GM12878 (cell line): ENCODE measurements at regions of chr16 and their contacts with region 1.

Region 1: GRCh38 chr16:17416461-17417311 is 54.1 kb downstream of the XYLT1 start:
- DNase-seq: peak; percentile 89
- ATAC-seq: peak; percentile 95
- H3K4me3 ChIP-seq: peak overlapping the region; percentile 34; the same call in 1 of the 2 replicates
- H3K27ac ChIP-seq: peak overlapping the region; percentile 90
- H3K4me1 ChIP-seq: peaks cover 51% of the 10 kb centered on the region
- H3K27me3 ChIP-seq: no peaks in the 10 kb centered on the region
- CTCF ChIP-seq: peak; percentile 23 to 38 (median 26); a peak in 5 of 6 replicates
- EP300 ChIP-seq: peak; percentile 83 to 90
- POLR2A ChIP-seq: peak; percentile 73
- RAD21 ChIP-seq: peak; percentile 59

Region 2: GRCh38 chr16:17258848-17259713 is 157.6 kb before region 1 on chr16:
- CTCF ChIA-PET with region 1: interaction called, 4 read pairs
- POLR2A ChIA-PET with region 1: no interaction called
- RAD21 ChIA-PET with region 1: interaction called, 11 read pairs
- SMC1A ChIA-PET with region 1: interaction called, 10 read pairs
- in situ Hi-C with region 1: loop called (anchors 5 kb)
- intact Hi-C with region 1: no loop called
- DNase-seq: peak; percentile 79
- ATAC-seq: peak; percentile 88
- H3K4me3 ChIP-seq: peak overlapping the region; percentile 47
- H3K27ac ChIP-seq: peak overlapping the region; percentile 93
- H3K4me1 ChIP-seq: peaks cover 33% of the 10 kb centered on the region
- H3K27me3 ChIP-seq: no peaks in the 10 kb centered on the region
- CTCF ChIP-seq: peak; percentile 64 to 75 (median 68)
- EP300 ChIP-seq: peak; percentile 22 to 83; a peak in 2 of 4 replicates
- POLR2A ChIP-seq: peak; percentile 62
- RAD21 ChIP-seq: peak; percentile 68

Region 3: DNA sequence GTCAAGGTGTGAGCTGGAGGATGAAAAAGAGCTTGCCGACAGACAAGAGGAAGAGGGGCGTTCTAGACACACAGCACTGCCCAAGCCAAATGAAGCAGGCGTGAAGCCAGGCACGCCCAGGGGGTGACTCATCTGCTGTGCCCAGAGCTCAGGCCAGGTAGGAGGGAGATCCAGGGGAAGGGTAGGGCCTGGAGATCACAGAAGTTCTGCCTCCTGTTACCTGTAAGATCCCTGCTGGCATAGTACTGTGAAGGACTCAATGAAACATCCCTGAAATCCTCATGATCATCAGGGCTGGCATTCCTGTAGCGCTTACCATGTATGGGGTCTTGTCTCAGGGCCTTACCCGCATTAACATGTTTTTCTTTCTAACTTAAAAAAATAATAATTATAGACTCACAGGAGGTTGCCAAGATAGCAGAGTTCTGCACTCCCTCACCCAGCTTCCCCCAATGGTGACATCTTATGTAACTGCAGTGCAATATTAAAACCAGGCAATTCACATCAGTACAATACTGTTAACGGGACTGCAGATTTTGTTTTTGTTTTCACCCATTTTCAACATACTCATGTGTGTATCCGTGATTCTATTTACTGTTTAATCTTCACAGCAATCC is 104.5 kb before region 1 on chr16:
- CTCF ChIA-PET with region 1: no interaction called
- POLR2A ChIA-PET with region 1: no interaction called
- RAD21 ChIA-PET with region 1: no interaction called
- SMC1A ChIA-PET with region 1: no interaction called
- in situ Hi-C with region 1: no loop called
- intact Hi-C with region 1: no loop called
- DNase-seq: no peak
- ATAC-seq: peak; percentile 39; the same call in 2 of the 3 replicates
- H3K4me3 ChIP-seq: no peak overlapping the region
- H3K27ac ChIP-seq: no peak overlapping the region
- H3K4me1 ChIP-seq: peaks cover 10% of the 10 kb centered on the region
- H3K27me3 ChIP-seq: no peaks in the 10 kb centered on the region
- CTCF ChIP-seq: no peak
- EP300 ChIP-seq: no peak
- POLR2A ChIP-seq: no peak
- RAD21 ChIP-seq: no peak

Region 4: DNA sequence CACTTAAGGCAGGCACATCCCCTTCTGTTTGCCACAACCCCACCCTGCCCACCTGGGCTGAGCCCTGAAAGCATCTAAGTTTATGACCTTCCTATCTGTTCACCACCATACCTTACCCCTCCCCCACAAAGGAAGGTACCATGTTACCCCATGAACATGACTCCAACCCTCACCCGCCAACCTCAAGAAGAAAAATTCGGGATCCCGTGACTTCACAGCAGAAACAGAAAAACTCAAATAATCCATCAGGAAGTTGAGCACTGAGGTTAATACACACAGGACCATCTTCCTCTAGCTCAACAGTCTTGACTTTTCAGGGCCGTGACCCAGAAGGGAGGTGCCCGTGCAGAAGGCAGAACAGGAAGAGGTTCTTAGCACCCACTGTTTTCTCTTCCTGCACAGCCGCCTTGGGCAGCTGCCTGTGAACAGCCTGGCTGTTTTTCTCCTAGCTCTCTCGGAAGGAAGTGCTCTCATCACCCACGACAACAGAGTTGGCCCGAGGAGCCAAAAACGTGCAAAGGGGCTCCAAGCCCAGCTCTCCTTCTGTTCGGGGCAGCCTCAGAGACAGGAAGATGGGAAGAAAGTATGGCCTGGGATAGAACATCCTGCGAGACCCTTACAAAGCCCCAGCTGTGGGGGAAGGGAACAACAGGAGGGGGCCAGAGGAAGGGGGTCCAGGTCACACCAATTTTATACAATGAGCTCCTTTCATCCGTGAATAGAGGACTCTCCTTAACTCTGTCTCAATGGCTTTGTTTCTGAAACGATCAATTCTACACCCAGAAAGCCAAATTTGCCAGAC is 47.1 kb before region 1 on chr16:
- CTCF ChIA-PET with region 1: interaction called, 15 read pairs
- POLR2A ChIA-PET with region 1: interaction called, 7 read pairs
- RAD21 ChIA-PET with region 1: interaction called, 27 read pairs
- SMC1A ChIA-PET with region 1: interaction called, 13 read pairs
- in situ Hi-C with region 1: no loop called
- intact Hi-C with region 1: no loop called
- DNase-seq: peak; percentile 53
- ATAC-seq: peak; percentile 94
- H3K4me3 ChIP-seq: peak overlapping the region; percentile 41; the same call in 1 of the 2 replicates
- H3K27ac ChIP-seq: peak overlapping the region; percentile 36
- H3K4me1 ChIP-seq: peaks cover 52% of the 10 kb centered on the region
- H3K27me3 ChIP-seq: no peaks in the 10 kb centered on the region
- CTCF ChIP-seq: no peak
- EP300 ChIP-seq: peak in 1 of 2 experiments; percentile 49; a peak in 1 of 4 replicates
- POLR2A ChIP-seq: peak; percentile 50
- RAD21 ChIP-seq: no peak

Region 5: GRCh38 chr16:17377360-17378324 is 39.0 kb before region 1 on chr16:
- CTCF ChIA-PET with region 1: interaction called, 12 read pairs
- POLR2A ChIA-PET with region 1: interaction called, 13 read pairs
- RAD21 ChIA-PET with region 1: interaction called, 28 read pairs
- SMC1A ChIA-PET with region 1: interaction called, 47 read pairs
- in situ Hi-C with region 1: no loop called
- intact Hi-C with region 1: no loop called
- DNase-seq: peak; percentile 80
- ATAC-seq: peak; percentile 90
- H3K4me3 ChIP-seq: 0 out of 2 replicates have a peak overlapping the region, but pooled peaks have one; percentile 43
- H3K27ac ChIP-seq: peak overlapping the region; percentile 72
- H3K4me1 ChIP-seq: peaks cover 35% of the 10 kb centered on the region
- H3K27me3 ChIP-seq: no peaks in the 10 kb centered on the region
- CTCF ChIP-seq: no peak
- EP300 ChIP-seq: peak; percentile 84 to 91; a peak in 2 of 4 replicates
- POLR2A ChIP-seq: no peak
- RAD21 ChIP-seq: peak; percentile 21; the same call in 1 of the 2 replicates

Region 6: DNA sequence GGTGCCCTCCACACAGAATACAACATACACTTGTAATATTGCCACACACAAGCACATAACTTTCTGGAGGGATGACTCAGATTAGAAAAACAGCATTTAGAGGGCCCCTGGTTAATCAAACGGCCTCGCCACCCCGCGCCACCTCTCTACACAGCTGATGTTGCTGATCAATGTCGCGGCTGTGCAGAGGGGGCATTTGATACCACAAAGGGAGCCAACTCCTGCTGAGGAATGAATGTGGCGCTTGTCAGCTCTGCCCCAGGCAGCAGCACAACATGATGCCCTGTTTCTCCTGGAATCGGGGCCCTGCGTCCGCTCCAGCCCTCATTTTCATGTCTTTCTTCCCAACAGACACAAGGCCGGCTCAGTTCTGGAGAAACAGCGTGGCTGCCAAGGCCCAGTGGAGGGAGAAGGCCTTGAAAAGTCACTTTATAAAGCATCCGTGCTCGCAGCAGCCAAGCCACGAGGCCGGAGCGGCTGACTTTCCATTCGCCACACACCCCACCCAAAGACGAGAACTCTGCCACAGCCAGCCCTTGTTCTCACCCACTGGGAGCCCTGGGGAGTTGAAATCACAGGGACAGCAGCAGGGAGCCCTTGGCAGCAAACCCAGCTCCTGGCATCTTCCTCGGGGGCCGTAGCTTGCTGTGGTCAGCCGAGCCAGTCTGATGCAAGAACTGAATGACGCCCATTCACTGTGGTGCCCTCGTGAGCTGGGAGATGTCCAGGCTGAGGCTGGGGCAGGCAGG is 11.6 kb before region 1 on chr16:
- CTCF ChIA-PET with region 1: interaction called, 7 read pairs
- POLR2A ChIA-PET with region 1: interaction called, 5 read pairs
- RAD21 ChIA-PET with region 1: interaction called, 14 read pairs
- SMC1A ChIA-PET with region 1: interaction called, 30 read pairs
- in situ Hi-C with region 1: no loop called
- intact Hi-C with region 1: no loop called
- DNase-seq: no peak
- ATAC-seq: no peak
- H3K4me3 ChIP-seq: no peak overlapping the region
- H3K27ac ChIP-seq: no peak overlapping the region
- H3K4me1 ChIP-seq: peaks cover 24% of the 10 kb centered on the region
- H3K27me3 ChIP-seq: no peaks in the 10 kb centered on the region
- CTCF ChIP-seq: no peak
- EP300 ChIP-seq: no peak
- POLR2A ChIP-seq: no peak
- RAD21 ChIP-seq: no peak

Region 7: DNA sequence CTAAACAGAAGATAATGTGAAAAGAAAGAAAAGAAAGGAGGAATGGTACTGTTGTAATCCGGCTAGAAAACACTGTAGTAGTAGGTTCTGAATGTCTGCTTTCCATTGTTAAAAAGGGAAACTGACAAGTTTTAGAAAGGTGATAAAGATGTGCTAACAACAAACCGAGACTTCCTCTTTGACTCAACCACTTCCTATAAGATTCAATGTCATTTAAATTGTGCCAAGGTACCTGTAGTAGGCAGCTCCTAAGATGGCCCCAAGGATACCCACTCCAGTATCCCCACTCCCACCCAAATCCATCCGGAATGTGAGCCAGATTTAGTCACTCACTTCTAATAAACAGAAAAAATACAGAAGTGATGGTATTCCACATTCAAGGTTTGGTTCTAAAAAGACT is 22.9 kb after region 1 on chr16:
- CTCF ChIA-PET with region 1: interaction called, 12 read pairs
- POLR2A ChIA-PET with region 1: interaction called, 3 read pairs
- RAD21 ChIA-PET with region 1: interaction called, 12 read pairs
- SMC1A ChIA-PET with region 1: interaction called, 32 read pairs
- in situ Hi-C with region 1: no loop called
- intact Hi-C with region 1: no loop called
- DNase-seq: no peak
- ATAC-seq: peak; percentile 75
- H3K4me3 ChIP-seq: no peak overlapping the region
- H3K27ac ChIP-seq: no peak overlapping the region
- H3K4me1 ChIP-seq: peaks cover 13% of the 10 kb centered on the region
- H3K27me3 ChIP-seq: no peaks in the 10 kb centered on the region
- CTCF ChIP-seq: no peak
- EP300 ChIP-seq: peak in 1 of 2 experiments; percentile 50; a peak in 1 of 4 replicates
- POLR2A ChIP-seq: no peak
- RAD21 ChIP-seq: no peak

Region 8: GRCh38 chr16:17459530-17460521 is 43.1 kb after region 1 on chr16:
- CTCF ChIA-PET with region 1: interaction called, 18 read pairs
- POLR2A ChIA-PET with region 1: interaction called, 25 read pairs
- RAD21 ChIA-PET with region 1: interaction called, 111 read pairs
- SMC1A ChIA-PET with region 1: interaction called, 110 read pairs
- in situ Hi-C with region 1: no loop called
- intact Hi-C with region 1: no loop called
- DNase-seq: no peak
- ATAC-seq: peak; percentile 72
- H3K4me3 ChIP-seq: no peak overlapping the region; the same call in 1 of the 2 replicates
- H3K27ac ChIP-seq: no peak overlapping the region
- H3K4me1 ChIP-seq: peaks cover 40% of the 10 kb centered on the region
- H3K27me3 ChIP-seq: no peaks in the 10 kb centered on the region
- CTCF ChIP-seq: no peak
- EP300 ChIP-seq: no peak
- POLR2A ChIP-seq: no peak
- RAD21 ChIP-seq: no peak

Region 9: DNA sequence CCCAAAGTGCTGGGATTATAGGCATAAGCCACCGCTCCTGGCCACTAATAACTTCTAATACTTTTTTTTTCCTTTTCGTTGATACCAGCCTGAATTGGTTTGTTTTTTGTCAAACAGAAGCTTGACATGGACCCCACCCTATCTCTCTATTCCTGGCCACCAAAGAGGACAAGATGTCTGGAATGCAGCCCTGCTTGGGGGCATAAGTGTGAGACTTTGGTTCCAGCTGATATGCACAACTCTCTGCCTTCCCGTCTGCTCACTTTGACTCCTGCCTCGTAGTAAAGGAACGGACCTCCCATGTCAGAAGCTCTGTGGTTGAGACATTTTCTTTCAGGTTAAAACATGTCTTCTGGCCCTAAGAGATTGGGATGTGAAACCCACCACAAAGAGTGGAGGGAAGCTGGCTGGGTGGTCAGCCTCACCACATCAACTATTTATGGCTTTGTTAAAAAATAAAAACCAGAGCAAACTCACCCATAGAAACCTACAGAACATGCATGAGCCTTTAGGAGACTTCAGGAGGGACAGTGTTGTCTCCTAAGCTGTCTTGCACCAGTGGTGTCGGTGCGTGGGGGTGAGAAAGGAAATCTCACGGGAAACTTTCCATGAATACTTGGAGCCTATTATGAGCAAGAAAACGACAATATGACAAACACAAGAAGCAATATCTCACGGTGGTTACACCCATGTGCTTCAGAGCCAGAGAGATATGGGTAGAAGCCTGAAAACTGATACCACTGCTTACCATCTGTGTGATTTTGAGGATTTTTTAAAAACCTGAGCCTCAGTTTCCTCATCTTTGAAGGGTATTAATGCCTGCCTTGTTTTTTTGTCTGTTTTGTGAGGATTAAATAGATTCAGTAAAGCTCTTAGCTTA is 115.7 kb after region 1 on chr16:
- CTCF ChIA-PET with region 1: no interaction called
- POLR2A ChIA-PET with region 1: no interaction called
- RAD21 ChIA-PET with region 1: no interaction called
- SMC1A ChIA-PET with region 1: no interaction called
- in situ Hi-C with region 1: no loop called
- intact Hi-C with region 1: no loop called
- DNase-seq: no peak
- ATAC-seq: peak; percentile 51
- H3K4me3 ChIP-seq: no peak overlapping the region
- H3K27ac ChIP-seq: no peak overlapping the region; the same call in 1 of the 2 replicates
- H3K4me1 ChIP-seq: peaks cover 25% of the 10 kb centered on the region
- H3K27me3 ChIP-seq: no peaks in the 10 kb centered on the region
- CTCF ChIP-seq: no peak
- EP300 ChIP-seq: no peak
- POLR2A ChIP-seq: no peak
- RAD21 ChIP-seq: no peak